Posterior cingulate gyrus (tissue), 11 donors: ENCODE measurements at regions of chr7 and their contacts with region 1.

Region 1: GRCh38 chr7:7424151-7424873 is 111.4 kb downstream of the COL28A1 start:
- DNase-seq: peak in 8 of 10 donors; percentile 28 to 88 (median 65)

Region 2: DNA sequence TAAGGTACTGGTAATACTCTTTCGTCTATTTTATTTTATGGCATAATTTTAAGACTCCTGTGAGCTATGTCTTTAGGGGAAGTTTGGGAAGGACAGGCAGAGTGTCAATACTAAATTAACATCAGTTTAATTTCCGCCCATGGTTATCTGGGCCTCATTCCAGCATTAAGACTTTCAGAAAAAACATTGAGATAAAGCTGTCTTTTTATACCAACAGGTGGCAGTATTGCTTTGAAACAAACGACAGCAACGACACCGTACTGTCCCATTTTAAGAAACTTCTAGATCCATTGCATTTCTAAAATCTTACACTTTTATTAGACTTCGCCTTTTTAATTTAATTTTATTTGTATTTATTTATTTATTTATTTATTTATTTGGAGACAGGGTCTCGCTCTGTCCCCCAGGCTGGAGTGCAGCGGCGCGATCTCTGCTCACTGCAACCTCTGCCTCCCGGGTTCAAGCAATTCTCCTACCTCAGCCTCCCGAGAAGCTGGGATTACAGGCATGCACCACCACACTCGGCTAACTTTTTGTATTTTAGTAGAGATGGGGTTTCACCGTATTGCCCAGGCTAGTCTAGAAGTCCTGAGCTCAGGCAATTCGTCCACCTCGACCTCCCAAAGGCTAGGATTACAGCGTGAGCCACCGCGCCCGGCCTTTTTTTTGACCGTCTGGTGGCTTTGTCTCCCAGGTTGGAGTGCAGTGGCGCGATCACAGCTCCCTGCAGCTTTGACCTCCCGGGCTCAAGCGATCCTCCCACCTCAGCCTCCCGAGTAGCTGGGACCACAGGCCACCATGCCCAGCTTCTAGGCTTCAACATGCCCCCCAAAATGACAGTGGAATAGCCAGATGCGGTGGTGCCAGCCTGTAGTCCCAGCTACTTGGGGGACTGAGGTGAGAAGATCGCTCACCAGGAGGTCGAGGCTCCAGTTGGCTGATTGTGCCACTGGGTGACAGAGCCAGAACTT is 320.7 kb before region 1 on chr7:
- intact Hi-C with region 1: loop called (anchors 2 kb)
- DNase-seq: peak in 1 of 10 donors; percentile 61

Region 3: DNA sequence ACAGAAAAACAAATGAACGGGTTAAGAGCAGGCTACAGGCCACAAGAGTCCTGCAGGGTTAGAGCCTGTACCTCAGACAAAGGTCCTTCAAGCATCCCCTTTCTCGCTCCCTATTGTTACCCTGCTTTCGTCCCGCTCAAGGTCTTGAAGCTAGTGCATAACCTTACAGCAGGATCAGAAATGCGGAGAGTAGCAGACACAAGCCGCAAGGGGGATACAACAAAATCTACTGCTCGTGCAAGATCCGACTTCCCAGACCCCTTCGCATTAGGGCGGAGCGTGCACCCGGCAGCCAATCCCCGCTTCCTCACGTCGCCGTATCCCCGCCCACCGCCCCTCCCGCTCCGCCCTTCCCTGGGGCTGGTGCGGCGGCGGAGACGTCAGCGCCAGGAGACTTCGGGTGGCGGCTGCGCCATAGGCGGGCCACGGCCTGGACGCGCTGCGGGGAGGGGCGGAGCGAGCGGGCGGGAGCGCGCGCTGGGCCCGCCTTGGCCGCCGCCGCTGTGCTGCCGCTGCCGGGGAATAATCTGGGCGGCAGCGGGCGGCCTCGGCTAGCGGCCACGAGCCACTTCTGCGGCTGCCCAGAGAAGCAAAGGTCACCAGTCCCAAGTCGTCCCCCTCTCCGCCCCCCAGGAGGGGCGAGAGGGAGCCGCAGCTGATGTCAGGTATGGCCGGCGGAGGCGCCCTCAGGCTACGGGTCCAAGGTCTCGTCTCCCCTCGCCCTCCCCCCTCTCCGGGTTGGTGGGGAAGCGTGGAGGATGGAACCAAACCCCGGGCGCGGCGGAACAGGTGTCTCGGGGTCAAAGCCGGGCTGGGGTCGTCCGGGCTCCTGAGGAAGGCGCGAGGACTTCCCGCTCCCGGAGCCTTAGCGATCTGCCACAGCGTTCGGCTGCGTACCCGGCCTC is 241.9 kb before region 1 on chr7 and contains the start of gene C1GALT1:
- intact Hi-C with region 1: loop called (anchors 2 kb)
- DNase-seq: peak; percentile 95 to 100 (median 97)

Region 4: GRCh38 chr7:7330997-7331396 is 93.3 kb before region 1 on chr7:
- intact Hi-C with region 1: no loop called
- DNase-seq: no peak

Region 5: DNA sequence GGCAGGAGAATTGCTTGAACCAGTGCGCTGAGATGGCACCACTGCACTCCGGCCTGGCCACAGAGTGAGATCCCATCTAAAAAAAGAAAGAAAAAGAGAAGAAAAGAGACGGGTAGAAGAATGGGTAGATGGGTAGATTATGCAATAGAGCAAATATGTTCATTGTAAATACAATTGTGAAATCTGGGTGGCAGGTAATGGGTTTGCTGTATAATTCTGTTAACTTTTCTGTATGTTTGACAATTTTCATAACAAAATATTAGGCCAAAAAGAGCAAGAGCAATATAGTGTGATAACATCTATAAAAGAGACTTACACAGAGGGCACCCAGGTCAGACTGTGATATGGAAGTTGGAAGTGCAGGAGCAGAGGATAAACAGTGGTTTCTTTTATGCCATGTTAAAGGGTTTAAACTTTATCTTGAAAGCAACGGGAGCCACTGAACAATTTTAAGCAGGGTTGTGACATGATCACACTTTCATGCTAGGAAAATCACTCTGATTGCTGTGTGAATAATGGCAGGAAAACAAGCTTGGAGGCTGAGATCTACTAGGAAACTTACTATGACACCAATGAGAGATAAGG is 118.0 kb after region 1 on chr7:
- intact Hi-C with region 1: loop called (anchors 1 kb)
- DNase-seq: peak in 1 of 10 donors; percentile 31

Region 6: DNA sequence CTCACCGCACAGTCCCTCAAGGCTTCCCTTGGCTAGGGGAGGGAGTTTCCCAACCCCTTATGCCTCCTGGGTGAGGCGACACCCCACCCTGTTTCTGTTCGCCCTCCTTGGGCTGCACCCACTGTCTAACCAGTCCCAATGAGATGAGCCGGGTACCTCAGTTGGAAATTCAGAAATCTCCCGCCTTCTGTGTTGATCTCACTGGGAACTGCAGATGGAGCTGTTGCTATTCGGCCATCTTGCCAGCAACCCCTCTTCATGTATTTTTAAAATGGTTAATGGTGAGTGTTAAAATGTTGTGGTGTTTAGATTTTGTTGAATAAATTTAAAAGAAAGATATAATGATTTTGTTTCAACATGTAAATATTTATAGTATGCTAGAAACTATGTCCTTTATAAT is 238.2 kb after region 1 on chr7:
- intact Hi-C with region 1: no loop called
- DNase-seq: peak in 1 of 10 donors; percentile 46

Region 7: DNA sequence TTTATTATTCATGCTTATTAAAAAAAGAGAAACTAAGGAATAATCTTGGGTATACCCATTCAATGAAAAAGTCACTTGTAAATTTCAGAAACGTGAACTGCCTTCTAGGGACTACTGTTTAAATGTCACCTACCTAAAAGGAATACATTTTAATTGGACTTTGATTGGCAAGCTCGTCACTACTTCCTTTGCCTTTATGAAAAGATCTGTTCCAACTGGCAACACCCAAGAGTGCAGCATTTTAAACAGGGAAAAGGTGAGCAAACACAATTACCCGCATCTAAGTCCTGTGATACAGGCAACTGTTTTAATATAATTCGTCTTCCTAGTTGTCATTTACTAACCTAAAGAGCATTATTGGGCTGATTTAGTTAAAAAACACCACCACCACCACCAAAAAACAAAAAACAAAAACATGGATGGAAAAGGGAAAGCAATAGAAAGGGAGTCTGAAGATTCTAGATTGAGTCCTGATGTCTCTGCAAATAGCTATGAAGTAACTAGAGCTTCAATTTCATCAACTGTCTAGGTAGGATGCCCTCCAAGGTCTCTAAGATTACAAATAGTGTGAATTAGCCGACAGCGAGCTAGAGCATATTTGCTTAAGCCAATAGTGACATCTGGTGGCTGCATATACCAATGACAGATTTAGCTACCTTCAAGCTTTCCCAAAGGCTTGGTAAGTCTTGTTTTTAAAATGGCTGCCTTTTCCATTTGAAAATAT is 871.5 kb after region 1 on chr7:
- intact Hi-C with region 1: loop called (anchors 10 kb)
- DNase-seq: peak in 1 of 10 donors; percentile 16